ENCODE measurements at regions of chr7 and their contacts with region 1.

Region 1: DNA sequence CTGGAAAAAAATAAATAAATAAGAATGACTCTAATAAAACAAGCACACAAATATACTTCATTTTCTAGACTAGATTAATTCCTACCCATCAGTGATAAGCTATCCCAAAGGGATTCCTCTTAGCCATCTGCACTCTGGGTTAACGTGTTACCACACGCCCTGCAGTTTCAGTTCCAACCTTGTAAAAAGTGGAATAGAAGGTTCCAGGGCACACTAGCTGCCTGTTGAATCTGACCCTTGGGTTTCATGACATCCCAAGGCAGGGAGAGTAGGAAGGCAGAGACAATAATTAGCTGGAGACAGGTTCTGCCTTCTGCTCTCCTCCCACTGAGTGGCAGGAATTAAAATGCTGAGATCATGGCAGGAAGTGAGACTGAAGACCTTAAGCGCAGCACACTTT is 33.5 kb downstream of the SLC37A3 start:
- DNase-seq: no peak
- ATAC-seq: no peak
- H3K4me3 ChIP-seq: no peak overlapping the region
- H3K27ac ChIP-seq: no peak overlapping the region
- H3K4me1 ChIP-seq: no peaks in the 10 kb centered on the region
- H3K27me3 ChIP-seq: no peaks in the 10 kb centered on the region
- CTCF ChIP-seq: no peak
- POLR2A ChIP-seq: no peak

Region 2: DNA sequence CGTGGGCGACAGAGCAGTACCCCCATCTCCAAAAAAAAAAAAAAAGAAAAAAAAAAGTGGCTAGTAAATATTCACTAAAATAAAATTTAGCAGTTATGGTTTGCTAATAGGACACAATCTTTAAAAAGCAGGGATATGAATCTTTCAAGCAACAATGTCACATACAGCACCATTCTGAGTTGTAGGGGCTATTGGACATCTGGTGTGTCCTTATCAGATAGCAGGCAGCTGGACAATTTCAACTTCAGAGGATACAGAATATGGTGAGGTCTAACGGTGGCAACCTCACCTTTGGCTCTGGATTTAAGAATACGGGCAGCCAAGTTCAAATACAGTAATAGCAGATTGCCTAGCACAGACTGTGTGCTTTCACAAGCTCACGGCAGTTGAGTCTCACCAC is 17.6 kb before region 1 on chr7:
- in situ Hi-C with region 1: no loop called
- intact Hi-C with region 1: loop called (anchors 1 kb)
- DNase-seq: no peak
- ATAC-seq: no peak
- H3K4me3 ChIP-seq: no peak overlapping the region
- H3K27ac ChIP-seq: no peak overlapping the region
- H3K4me1 ChIP-seq: no peaks in the 10 kb centered on the region
- H3K27me3 ChIP-seq: no peaks in the 10 kb centered on the region
- CTCF ChIP-seq: no peak
- POLR2A ChIP-seq: no peak

Region 3: DNA sequence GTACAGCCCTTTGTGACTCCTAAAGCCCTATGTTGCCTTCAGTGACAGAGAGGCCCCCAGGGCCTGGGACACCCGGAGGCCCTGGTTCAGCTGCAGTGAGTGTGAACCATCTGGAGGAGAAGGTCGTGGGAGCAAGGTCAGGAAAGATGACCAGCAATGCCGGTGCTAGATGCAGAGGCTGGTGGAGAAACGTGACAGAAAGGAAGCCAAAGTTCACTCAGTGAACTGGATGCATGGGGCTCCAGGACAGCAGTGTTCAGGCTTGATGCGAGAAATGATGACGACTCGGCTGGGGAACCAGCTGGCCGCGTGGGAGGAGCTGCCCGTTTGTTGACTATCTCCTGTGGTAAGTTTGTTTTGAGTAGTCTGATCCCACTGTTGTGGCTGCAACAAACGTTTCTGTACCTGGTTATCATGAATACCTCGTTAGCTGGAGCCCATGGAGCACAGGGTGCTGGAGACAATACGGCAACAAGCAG is 168.6 kb after region 1 on chr7:
- in situ Hi-C with region 1: no loop called
- intact Hi-C with region 1: no loop called
- DNase-seq: no peak
- ATAC-seq: peak in 1 of 2 donors; percentile 30
- H3K4me3 ChIP-seq: no peak overlapping the region
- H3K27ac ChIP-seq: no peak overlapping the region
- H3K4me1 ChIP-seq: peaks cover 0 to 5% of the 10 kb centered on the region in 2 donors
- H3K27me3 ChIP-seq: no peaks in the 10 kb centered on the region
- CTCF ChIP-seq: no peak
- POLR2A ChIP-seq: no peak